ENCODE measurements at regions of chr15 and their contacts with region 1.

Region 1: GRCh38 chr15:89206908-89207331 is 14.5 kb downstream of the RLBP1 start:
- DNase-seq: peak; percentile 38 to 82 (median 61)
- ATAC-seq: peak; percentile 88
- H3K4me3 ChIP-seq: peak overlapping the region; percentile 24
- H3K4me3 Mint-ChIP-seq: peak overlapping the region in 2 of 10 donors; percentile 20 to 59
- H3K27ac ChIP-seq: no peak overlapping the region
- H3K27ac Mint-ChIP-seq: peak overlapping the region in 1 of 9 donors; percentile 28
- H3K4me1 ChIP-seq: peaks cover 0 to 11% of the 10 kb centered on the region in 2 donors
- H3K4me1 Mint-ChIP-seq: peaks cover 7 to 37% (median 27%) of the 10 kb centered on the region in 7 donors
- H3K27me3 ChIP-seq: no peaks in the 10 kb centered on the region
- H3K27me3 Mint-ChIP-seq: peaks cover 0 to 7% (median 0%) of the 10 kb centered on the region in 5 donors

Region 2: GRCh38 chr15:89171136-89172072 is 35.5 kb before region 1 on chr15:
- CTCF ChIA-PET with region 1: no interaction called
- POLR2A ChIA-PET with region 1: no interaction called
- intact Hi-C with region 1: no loop called
- DNase-seq: peak in 4 of 9 donors; percentile 5 to 25 (median 10)
- ATAC-seq: peak; percentile 61
- H3K4me3 ChIP-seq: no peak overlapping the region
- H3K4me3 Mint-ChIP-seq: no peak overlapping the region
- H3K27ac ChIP-seq: no peak overlapping the region
- H3K27ac Mint-ChIP-seq: no peak overlapping the region
- H3K4me1 ChIP-seq: no peaks in the 10 kb centered on the region
- H3K4me1 Mint-ChIP-seq: peaks cover 0 to 11% (median 4%) of the 10 kb centered on the region in 7 donors
- H3K27me3 ChIP-seq: no peaks in the 10 kb centered on the region
- H3K27me3 Mint-ChIP-seq: no peaks in the 10 kb centered on the region

Region 3: GRCh38 chr15:89243691-89244471 is 37.0 kb after region 1 on chr15 and contains the start of gene FANCI:
- CTCF ChIA-PET with region 1: interaction called, 3 read pairs
- POLR2A ChIA-PET with region 1: no interaction called
- intact Hi-C with region 1: loop called (anchors 1 to 2 kb)
- DNase-seq: peak; percentile 89 to 97 (median 94)
- ATAC-seq: peak; percentile 100
- H3K4me3 ChIP-seq: peak within 1 kb of the TSS; percentile 79
- H3K4me3 Mint-ChIP-seq: peak within 1 kb of the TSS; percentile 86 to 98 (median 94)
- H3K27ac ChIP-seq: peak within 1 kb of the TSS; percentile 65
- H3K27ac Mint-ChIP-seq: peak within 1 kb of the TSS; percentile 78 to 96 (median 84)
- H3K4me1 ChIP-seq: peaks cover 6 to 13% of the 10 kb centered on the region in 2 donors
- H3K4me1 Mint-ChIP-seq: peaks cover 20 to 40% (median 26%) of the 10 kb centered on the region in 7 donors
- H3K27me3 ChIP-seq: no peaks in the 10 kb centered on the region
- H3K27me3 Mint-ChIP-seq: peaks cover 0 to 8% (median 0%) of the 10 kb centered on the region in 5 donors
- total RNA-seq, gene FANCI: 8.0 to 132 (median 9.7) TPM

Region 4: GRCh38 chr15:89299896-89300295 is 93.0 kb after region 1 on chr15:
- CTCF ChIA-PET with region 1: no interaction called
- POLR2A ChIA-PET with region 1: no interaction called
- intact Hi-C with region 1: loop called (anchors 2 to 10 kb)
- DNase-seq: no peak
- ATAC-seq: no peak
- H3K4me3 ChIP-seq: no peak overlapping the region
- H3K4me3 Mint-ChIP-seq: no peak overlapping the region
- H3K27ac ChIP-seq: no peak overlapping the region
- H3K27ac Mint-ChIP-seq: peak overlapping the region in 1 of 9 donors; percentile 43
- H3K4me1 ChIP-seq: no peaks in the 10 kb centered on the region
- H3K4me1 Mint-ChIP-seq: peaks cover 0 to 38% (median 0%) of the 10 kb centered on the region in 7 donors
- H3K27me3 ChIP-seq: no peaks in the 10 kb centered on the region
- H3K27me3 Mint-ChIP-seq: no peaks in the 10 kb centered on the region

Region 5: DNA sequence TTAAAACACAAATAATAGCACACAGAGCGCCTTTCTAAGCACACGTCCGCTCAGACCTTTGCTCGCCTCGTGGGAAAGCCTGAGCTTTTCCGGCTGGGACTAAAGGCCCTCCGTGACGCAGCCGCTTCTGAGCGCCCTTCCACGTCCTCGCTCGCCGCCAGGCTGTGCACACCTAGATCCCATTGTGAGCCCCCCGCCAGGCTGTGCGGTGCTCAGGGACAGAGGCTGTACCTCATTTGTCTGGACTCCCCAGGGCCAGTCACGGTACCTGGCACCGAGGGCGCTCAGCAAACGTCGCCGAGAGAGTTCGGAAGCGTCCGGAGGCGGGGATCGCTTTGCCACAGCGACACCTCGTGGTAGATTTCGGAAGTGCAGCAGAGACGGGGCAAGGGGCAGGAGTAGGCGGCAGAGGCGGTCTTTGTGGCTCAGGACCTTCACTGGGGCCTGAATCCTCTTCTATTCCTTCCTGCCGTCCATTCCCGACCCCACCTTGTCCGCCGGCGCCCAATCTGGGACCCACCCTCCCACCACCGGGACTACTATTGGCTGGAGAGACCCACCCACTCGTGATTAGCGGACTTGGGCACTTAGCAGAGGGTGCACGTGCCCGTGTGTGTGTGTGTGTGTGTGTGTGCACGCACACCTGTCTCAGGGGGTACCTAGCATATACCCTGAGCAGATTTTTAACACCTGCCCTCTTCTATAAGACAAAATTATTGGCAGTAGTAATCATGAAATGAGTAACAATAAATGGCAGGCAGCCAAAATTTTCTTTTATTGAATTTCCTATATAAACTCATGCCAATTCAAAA is 223.8 kb after region 1 on chr15:
- CTCF ChIA-PET with region 1: interaction called, 5 read pairs
- POLR2A ChIA-PET with region 1: no interaction called
- intact Hi-C with region 1: loop called in 1 of 2 experiments (anchors 1 kb)
- DNase-seq: peak; percentile 54 to 96 (median 79)
- ATAC-seq: peak; percentile 94
- H3K4me3 ChIP-seq: peak overlapping the region; percentile 49
- H3K4me3 Mint-ChIP-seq: peak overlapping the region; percentile 64 to 89 (median 84)
- H3K27ac ChIP-seq: no peak overlapping the region
- H3K27ac Mint-ChIP-seq: peak overlapping the region in 3 of 9 donors; percentile 62 to 78 (median 71)
- H3K4me1 ChIP-seq: no peaks in the 10 kb centered on the region
- H3K4me1 Mint-ChIP-seq: peaks cover 3 to 10% (median 6%) of the 10 kb centered on the region in 7 donors
- H3K27me3 ChIP-seq: no peaks in the 10 kb centered on the region
- H3K27me3 Mint-ChIP-seq: peaks cover 17 to 27% (median 20%) of the 10 kb centered on the region in 5 donors

Region 6: GRCh38 chr15:89492111-89492641 is 285.3 kb after region 1 on chr15:
- CTCF ChIA-PET with region 1: no interaction called
- POLR2A ChIA-PET with region 1: no interaction called
- intact Hi-C with region 1: no loop called
- DNase-seq: no peak
- ATAC-seq: no peak
- H3K4me3 ChIP-seq: no peak overlapping the region
- H3K4me3 Mint-ChIP-seq: no peak overlapping the region
- H3K27ac ChIP-seq: no peak overlapping the region
- H3K27ac Mint-ChIP-seq: no peak overlapping the region
- H3K4me1 ChIP-seq: no peaks in the 10 kb centered on the region
- H3K4me1 Mint-ChIP-seq: peaks cover 0 to 12% (median 5%) of the 10 kb centered on the region in 7 donors
- H3K27me3 ChIP-seq: peaks cover 0 to 8% of the 10 kb centered on the region in 2 donors
- H3K27me3 Mint-ChIP-seq: peaks cover 43 to 63% (median 59%) of the 10 kb centered on the region in 5 donors

Measured in naive thymus-derived CD4-positive, alpha-beta T cell (primary cell).